ENCODE measurements at regions of chr1 and their contacts with region 1.

Region 1: GRCh38 chr1:36420836-36421664 is 23.3 kb upstream of the LSM10 start:
- DNase-seq: peak; percentile 82
- H3K4me3 Mint-ChIP-seq: no peak overlapping the region
- H3K27ac Mint-ChIP-seq: peak overlapping the region; percentile 53
- H3K4me1 Mint-ChIP-seq: peaks cover 12% of the 10 kb centered on the region
- H3K27me3 Mint-ChIP-seq: no peaks in the 10 kb centered on the region

Region 2: GRCh38 chr1:36099681-36100341 is 321.2 kb before region 1 on chr1:
- intact Hi-C with region 1: loop called (anchors 2 kb)
- DNase-seq: peak; percentile 63
- H3K4me3 Mint-ChIP-seq: no peak overlapping the region
- H3K27ac Mint-ChIP-seq: no peak overlapping the region
- H3K4me1 Mint-ChIP-seq: peaks cover 3% of the 10 kb centered on the region
- H3K27me3 Mint-ChIP-seq: no peaks in the 10 kb centered on the region

Region 3: DNA sequence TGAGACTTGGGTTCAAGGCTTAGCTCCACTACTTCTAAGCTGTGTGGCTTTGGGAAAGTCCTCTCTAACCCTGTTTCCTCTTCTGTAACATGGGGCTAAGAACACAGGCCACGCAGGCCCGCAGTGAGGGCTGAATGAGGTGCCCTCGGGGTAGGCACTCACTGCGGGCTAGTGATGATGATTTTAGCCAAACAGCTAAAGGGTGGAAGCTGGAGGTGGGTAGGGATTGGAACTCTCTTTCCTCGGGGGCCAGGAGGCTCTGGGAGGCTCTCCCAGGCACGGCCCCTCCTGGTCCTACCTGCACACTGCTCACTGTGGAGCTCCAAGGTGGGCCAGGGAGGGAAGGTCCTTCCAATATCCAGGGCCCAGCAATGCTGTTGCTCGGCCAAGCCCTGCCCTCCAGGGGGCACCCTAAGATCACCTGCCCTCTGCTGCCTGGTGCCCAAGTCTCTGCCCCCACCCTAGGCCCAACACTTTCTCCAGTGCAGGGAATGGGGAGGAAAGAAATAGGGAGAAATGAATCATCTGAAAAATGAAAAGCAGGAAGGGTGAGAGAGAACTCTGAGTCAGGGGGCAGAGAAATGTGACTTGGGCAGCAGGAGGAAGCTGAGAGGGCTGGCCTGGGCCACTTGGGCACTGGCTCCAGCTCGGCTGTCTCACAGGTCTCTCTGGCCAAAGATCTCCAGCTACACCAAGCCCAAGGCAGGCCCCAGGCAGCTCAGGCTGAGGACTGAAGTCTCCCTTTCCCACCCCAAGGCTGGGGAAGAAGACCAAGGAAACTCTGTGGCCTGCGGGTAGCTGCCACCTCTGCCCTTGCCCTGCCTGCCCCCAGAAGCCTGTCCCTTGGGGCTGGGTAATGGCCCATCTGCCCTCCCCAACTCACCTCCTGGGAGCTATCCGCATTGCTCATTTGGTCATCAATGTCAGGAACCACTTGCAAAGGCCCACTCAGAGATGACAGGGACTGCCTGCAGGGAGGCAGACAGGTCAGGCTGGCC is 78.3 kb before region 1 on chr1:
- intact Hi-C with region 1: loop called (anchors 1 kb)
- DNase-seq: no peak
- H3K4me3 Mint-ChIP-seq: no peak overlapping the region
- H3K27ac Mint-ChIP-seq: no peak overlapping the region
- H3K4me1 Mint-ChIP-seq: peaks cover 5% of the 10 kb centered on the region
- H3K27me3 Mint-ChIP-seq: no peaks in the 10 kb centered on the region

Region 4: GRCh38 chr1:36369061-36369861 is 51.8 kb before region 1 on chr1:
- intact Hi-C with region 1: loop called (anchors 2 kb)
- DNase-seq: peak; percentile 73
- H3K4me3 Mint-ChIP-seq: no peak overlapping the region
- H3K27ac Mint-ChIP-seq: no peak overlapping the region
- H3K4me1 Mint-ChIP-seq: peaks cover 50% of the 10 kb centered on the region
- H3K27me3 Mint-ChIP-seq: no peaks in the 10 kb centered on the region

Region 5: GRCh38 chr1:36385410-36386257 is 35.4 kb before region 1 on chr1 and contains the start of gene STK40:
- intact Hi-C with region 1: loop called (anchors 5 kb)
- DNase-seq: peak; percentile 97
- H3K4me3 Mint-ChIP-seq: peak within 1 kb of the TSS; percentile 91
- H3K27ac Mint-ChIP-seq: peak within 1 kb of the TSS; percentile 94
- H3K4me1 Mint-ChIP-seq: peaks cover 37% of the 10 kb centered on the region
- H3K27me3 Mint-ChIP-seq: no peaks in the 10 kb centered on the region
- total RNA-seq, gene STK40: 41.3 and 42.4 TPM in 2 replicates

Region 6: DNA sequence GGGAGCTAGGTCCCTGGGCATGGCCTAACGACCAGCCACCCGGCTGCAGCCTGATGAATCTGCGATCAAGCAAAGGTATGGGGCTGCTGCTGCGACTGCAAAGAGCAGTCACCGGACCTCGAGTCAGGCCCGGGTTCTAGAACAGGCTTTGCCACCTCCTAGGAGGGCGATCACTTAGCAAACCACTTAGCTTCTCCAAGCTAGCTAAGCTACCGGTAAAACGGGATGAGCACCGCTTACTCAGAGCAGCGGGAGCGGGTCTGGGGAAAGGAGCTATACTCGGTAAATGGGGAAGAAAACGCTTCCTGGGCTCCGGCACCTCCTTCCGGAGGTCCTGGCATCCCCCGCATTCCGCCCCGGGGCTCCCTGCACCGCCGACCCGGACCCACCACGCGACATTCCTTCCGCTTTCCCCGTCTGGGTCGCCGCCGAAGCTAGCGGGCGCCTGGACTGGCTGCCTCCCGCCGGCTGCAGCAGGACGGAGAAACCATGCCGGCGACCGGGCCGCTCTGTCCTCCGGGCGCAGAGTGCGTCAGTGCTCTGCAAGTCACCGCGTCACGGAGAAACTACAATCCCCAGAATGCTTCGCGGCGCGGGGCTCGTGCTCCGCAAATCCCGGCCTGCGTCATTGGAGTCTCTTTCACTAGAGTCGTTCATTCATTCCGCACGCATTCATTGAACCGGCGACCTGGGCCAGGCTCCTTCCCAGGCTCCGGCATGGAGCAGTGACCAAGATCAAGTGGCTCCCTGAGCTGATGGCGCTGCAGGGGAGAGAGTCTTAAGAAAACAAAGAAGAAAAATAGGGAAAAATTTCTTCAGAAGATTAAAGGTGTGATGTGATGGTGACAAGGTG is 23.4 kb before region 1 on chr1 and contains the start of gene LSM10:
- intact Hi-C with region 1: loop called (anchors 2 kb)
- DNase-seq: peak; percentile 86
- H3K4me3 Mint-ChIP-seq: peak within 1 kb of the TSS; percentile 99
- H3K27ac Mint-ChIP-seq: peak within 1 kb of the TSS; percentile 100
- H3K4me1 Mint-ChIP-seq: peaks cover 19% of the 10 kb centered on the region
- H3K27me3 Mint-ChIP-seq: no peaks in the 10 kb centered on the region
- total RNA-seq, gene LSM10: 48.4 and 55.3 TPM in 2 replicates